Sigmoid colon (tissue), 7 donors: ENCODE measurements at regions of chr7 and their contacts with region 1.

Region 1: GRCh38 chr7:16982640-16983350 is 101.0 kb upstream of the AGR3 start:
- DNase-seq: no peak
- H3K4me3 ChIP-seq: no peak overlapping the region
- H3K27ac ChIP-seq: no peak overlapping the region
- H3K4me1 ChIP-seq: peaks cover 0 to 5% (median 0%) of the 10 kb centered on the region in 4 donors
- H3K27me3 ChIP-seq: no peaks in the 10 kb centered on the region
- CTCF ChIP-seq: peak; percentile 59 to 90 (median 75)
- EP300 ChIP-seq: no peak
- POLR2A ChIP-seq: no peak

Region 2: DNA sequence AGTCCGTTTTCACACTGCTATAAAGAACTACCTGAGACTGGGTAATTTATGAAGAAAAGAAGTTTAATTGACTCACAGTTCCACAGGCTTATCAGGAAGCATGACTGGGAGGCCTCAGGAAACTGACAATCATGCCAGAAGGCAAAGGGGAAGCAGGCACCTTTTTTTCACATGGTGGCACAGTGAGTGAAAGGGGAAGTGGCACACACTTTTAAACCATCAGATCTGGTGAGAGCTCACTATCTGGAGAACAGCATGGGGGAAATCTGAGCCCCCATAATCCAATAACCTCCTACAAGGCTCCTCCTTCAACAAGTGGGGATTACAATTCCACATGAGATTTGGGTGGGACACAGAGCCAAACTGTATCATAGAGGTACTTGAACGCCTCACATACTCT is 131.0 kb before region 1 on chr7:
- intact Hi-C with region 1: no loop called
- DNase-seq: no peak
- H3K4me3 ChIP-seq: no peak overlapping the region
- H3K27ac ChIP-seq: no peak overlapping the region
- H3K4me1 ChIP-seq: no peaks in the 10 kb centered on the region
- H3K27me3 ChIP-seq: no peaks in the 10 kb centered on the region
- CTCF ChIP-seq: no peak
- EP300 ChIP-seq: no peak
- POLR2A ChIP-seq: no peak

Region 3: DNA sequence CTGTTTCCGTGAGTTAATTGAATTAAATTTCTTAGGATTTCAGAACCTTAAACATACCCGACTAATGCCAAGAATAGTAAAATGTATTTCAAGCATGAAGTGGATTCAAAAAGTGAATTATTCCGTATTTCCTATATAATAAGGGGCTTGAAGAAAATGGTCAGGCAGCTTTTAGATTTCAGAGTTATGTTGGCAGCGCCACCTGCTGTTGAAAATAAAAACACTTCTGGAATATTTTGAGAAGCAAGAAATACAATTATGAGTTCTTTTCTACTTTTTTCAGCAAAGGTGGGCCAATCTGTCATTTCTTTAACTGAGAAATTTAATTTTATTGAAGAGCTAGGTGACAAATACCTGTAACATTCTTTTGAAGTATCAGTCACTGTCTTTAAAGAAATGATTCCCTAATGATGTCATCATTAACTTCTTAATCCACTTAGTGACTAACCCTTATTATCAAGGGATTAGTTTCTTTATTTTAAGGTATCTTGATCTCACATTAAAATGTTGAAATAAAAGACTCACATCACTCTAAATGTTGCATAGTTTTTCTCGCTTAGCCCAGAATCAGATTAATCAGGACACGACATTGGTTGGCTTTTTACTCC is 64.4 kb before region 1 on chr7:
- intact Hi-C with region 1: loop called (anchors 10 kb)
- DNase-seq: no peak
- H3K4me3 ChIP-seq: no peak overlapping the region
- H3K27ac ChIP-seq: no peak overlapping the region
- H3K4me1 ChIP-seq: peaks cover 0 to 12% (median 10%) of the 10 kb centered on the region in 4 donors
- H3K27me3 ChIP-seq: no peaks in the 10 kb centered on the region
- CTCF ChIP-seq: peak; percentile 28 to 63 (median 51)
- EP300 ChIP-seq: no peak
- POLR2A ChIP-seq: no peak

Region 4: GRCh38 chr7:17044858-17045257 is 62.1 kb after region 1 on chr7:
- intact Hi-C with region 1: no loop called
- DNase-seq: no peak
- H3K4me3 ChIP-seq: no peak overlapping the region
- H3K27ac ChIP-seq: no peak overlapping the region
- H3K4me1 ChIP-seq: peaks cover 0 to 13% (median 0%) of the 10 kb centered on the region in 4 donors
- H3K27me3 ChIP-seq: no peaks in the 10 kb centered on the region
- CTCF ChIP-seq: no peak
- EP300 ChIP-seq: no peak
- POLR2A ChIP-seq: no peak

Region 5: DNA sequence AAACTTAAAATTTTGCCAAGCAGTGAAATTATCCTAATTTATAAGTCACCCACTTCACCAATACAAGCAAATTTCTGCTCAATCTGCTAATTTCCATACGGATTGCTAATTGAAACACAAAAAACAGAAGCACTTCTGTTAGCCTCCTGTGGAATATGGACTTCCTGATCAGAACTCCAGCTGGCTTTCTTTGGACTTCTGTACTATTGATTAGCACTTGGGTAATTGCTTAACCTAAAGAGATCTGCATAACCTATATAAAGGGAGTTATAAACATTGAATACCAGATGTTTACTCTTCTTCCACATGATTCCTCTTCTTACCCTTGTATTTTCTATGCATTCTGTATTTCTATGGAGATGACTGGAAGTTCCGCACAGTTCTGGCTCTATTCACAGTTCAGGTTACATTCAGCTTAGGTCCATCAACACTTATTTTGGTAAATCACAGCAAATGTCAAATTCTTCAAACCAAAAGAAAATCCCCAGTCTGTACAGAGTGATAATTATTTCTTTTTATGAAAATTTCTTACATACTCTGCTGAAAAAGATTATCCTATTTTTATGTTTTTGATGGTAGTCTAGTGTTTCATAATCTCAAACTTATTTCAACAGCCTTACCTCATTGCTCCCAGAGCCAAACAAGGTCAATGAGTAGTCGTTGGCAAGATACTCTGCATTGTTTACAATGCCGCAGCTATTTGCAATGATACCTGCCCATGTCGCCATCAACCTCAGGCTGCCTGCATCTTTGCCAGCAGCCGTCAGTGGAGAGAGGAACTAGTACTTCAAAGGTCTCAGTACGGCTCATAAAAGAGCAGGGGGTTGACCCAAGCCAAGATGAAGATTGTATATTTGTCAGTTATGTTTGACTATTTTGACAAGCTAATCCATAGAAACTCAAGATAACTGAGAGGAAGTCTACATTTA is 541.3 kb after region 1 on chr7:
- intact Hi-C with region 1: loop called (anchors 10 kb)
- DNase-seq: no peak
- H3K4me3 ChIP-seq: no peak overlapping the region
- H3K27ac ChIP-seq: peak overlapping the region in 1 of 4 donors; percentile 29
- H3K4me1 ChIP-seq: peaks cover 0 to 18% (median 11%) of the 10 kb centered on the region in 4 donors
- H3K27me3 ChIP-seq: no peaks in the 10 kb centered on the region
- CTCF ChIP-seq: no peak
- EP300 ChIP-seq: no peak
- POLR2A ChIP-seq: no peak

Region 6: GRCh38 chr7:17651926-17652385 is 669.2 kb after region 1 on chr7:
- intact Hi-C with region 1: loop called (anchors 5 kb)
- DNase-seq: peak; percentile 69
- H3K4me3 ChIP-seq: no peak overlapping the region
- H3K27ac ChIP-seq: peak overlapping the region; percentile 23 to 52 (median 50)
- H3K4me1 ChIP-seq: peaks cover 0 to 22% (median 11%) of the 10 kb centered on the region in 4 donors
- H3K27me3 ChIP-seq: no peaks in the 10 kb centered on the region
- CTCF ChIP-seq: no peak
- EP300 ChIP-seq: no peak
- POLR2A ChIP-seq: no peak